Activated CD4-positive, alpha-beta T cell treated with anti-CD3 and anti-CD28 coated beads for 36 hours (primary cell): ENCODE measurements at regions of chr14 and their contacts with region 1.

Region 1: DNA sequence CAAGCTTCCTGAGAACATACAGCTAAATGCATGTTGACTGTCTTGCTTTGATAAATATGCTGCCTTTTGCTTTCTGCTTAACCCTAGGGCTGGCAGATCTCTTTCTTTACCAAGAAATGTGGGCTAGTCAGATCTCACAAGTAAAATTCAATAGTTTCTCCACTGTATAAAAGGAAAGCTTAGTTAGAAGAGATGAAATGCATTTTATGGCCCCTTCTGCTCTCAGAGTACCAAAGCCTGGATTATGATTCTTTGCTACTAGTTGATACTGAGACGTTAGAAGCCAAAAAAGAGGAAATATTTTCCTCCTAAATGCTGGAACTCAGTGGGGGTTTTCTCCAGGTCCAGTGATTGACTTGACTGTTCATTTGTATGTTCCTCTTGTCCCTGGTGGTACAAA is 552.7 kb downstream of the SNAPC1 start:
- DNase-seq: no peak
- ATAC-seq: no peak
- H3K4me3 Mint-ChIP-seq: no peak overlapping the region
- H3K27ac Mint-ChIP-seq: no peak overlapping the region
- H3K4me1 Mint-ChIP-seq: no peaks in the 10 kb centered on the region
- H3K27me3 Mint-ChIP-seq: no peaks in the 10 kb centered on the region

Region 2: DNA sequence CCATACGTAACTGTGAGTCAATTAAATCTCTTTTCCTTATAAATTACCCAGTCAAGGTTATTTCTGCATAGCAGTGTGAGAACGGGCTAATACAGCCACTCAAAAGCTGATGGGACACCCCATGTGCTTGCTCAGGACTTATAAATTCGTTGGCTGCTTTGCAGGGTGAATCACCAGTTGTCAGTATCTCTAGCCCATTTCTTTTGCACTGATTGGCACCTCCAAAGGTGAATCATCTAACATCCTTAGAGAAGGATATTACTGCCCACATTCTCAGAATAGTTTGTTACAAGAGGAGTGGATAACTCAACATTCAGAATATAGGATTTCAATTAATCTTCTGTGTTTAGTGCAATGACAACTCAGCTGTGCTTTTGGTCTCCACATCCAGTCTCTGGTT is 128.9 kb after region 1 on chr14:
- CTCF ChIA-PET with region 1: no interaction called
- POLR2A ChIA-PET with region 1: no interaction called
- intact Hi-C with region 1: no loop called
- DNase-seq: no peak
- ATAC-seq: no peak
- H3K4me3 Mint-ChIP-seq: no peak overlapping the region
- H3K27ac Mint-ChIP-seq: no peak overlapping the region
- H3K4me1 Mint-ChIP-seq: no peaks in the 10 kb centered on the region
- H3K27me3 Mint-ChIP-seq: no peaks in the 10 kb centered on the region

Region 3: GRCh38 chr14:62691613-62692487 is 377.0 kb after region 1 on chr14:
- CTCF ChIA-PET with region 1: no interaction called
- POLR2A ChIA-PET with region 1: no interaction called
- intact Hi-C with region 1: no loop called
- DNase-seq: no peak
- ATAC-seq: no peak
- H3K4me3 Mint-ChIP-seq: no peak overlapping the region
- H3K27ac Mint-ChIP-seq: no peak overlapping the region
- H3K4me1 Mint-ChIP-seq: no peaks in the 10 kb centered on the region
- H3K27me3 Mint-ChIP-seq: no peaks in the 10 kb centered on the region

Region 4: DNA sequence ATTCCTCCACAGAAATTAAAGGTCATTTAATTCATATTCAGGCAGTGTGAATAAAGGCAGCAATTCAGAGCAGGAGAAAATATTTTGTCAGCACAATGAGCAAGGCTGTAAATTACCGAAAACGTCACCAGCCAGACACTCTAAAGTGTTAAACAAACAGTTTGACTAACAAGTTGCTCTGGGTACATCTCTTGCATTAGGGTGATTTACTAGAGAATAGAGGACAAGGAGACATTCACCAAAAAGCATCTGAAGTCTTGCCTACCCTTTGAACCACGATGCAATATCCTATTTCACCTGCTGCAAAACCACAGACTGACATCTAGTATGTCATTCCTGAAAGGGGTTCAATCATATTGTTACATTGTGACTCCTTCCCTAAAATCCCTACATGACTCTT is 1031.0 kb after region 1 on chr14:
- CTCF ChIA-PET with region 1: no interaction called
- POLR2A ChIA-PET with region 1: no interaction called
- intact Hi-C with region 1: loop called in 1 of 2 experiments (anchors 5 kb)
- DNase-seq: no peak
- ATAC-seq: no peak
- H3K4me3 Mint-ChIP-seq: no peak overlapping the region
- H3K27ac Mint-ChIP-seq: no peak overlapping the region
- H3K4me1 Mint-ChIP-seq: no peaks in the 10 kb centered on the region
- H3K27me3 Mint-ChIP-seq: peaks cover 26% of the 10 kb centered on the region